IMR-90 (cell line): ENCODE measurements at regions of chrX and their contacts with region 1.

Region 1: DNA sequence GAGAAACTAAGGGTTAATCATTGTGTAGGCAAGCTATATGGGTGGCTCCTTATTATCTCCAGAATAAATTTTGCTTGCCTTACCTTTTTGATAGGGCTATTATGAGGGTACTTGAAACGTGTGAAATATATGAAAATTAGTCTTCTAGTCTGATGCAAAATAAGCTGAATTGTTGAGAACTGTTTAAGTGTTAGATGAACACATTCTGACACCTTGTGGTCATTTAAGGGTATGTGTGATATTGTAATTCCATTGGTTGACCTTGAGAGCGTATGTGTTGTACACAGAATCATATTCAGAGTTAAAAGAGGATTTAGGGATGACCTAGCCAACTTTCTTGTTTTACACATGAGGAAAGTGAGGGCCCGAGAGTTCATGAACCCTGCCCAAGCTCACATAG is 44.6 kb upstream of the LINC00632 start:
- DNase-seq: peak; percentile 18
- ATAC-seq: no peak
- H3K4me3 ChIP-seq: no peak overlapping the region
- H3K27ac ChIP-seq: no peak overlapping the region
- H3K4me1 ChIP-seq: no peaks in the 10 kb centered on the region
- H3K27me3 ChIP-seq: no peaks in the 10 kb centered on the region
- CTCF ChIP-seq: peak; percentile 43
- POLR2A ChIP-seq: no peak
- RAD21 ChIP-seq: peak; percentile 47

Region 2: DNA sequence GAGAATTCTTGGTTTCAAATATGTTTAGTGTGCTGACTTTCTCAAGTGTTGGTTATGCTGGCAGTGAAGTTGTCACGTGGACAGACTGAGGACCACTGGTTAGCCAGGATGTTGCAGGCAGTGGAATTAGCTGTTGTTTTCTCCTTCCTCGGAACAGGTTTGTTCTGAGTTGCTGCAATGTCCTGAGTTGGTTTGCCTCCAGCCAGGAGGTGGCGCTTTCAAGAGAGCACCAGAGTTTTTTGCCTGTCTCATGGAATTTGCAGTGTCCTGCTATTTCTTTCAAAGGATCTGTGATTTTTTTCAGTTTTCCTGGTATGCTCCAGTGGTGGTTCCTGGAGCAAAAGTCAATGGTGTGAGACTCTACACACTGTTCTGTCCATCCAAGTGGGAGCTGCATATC is 541.5 kb before region 1 on chrX:
- CTCF ChIA-PET with region 1: no interaction called
- POLR2A ChIA-PET with region 1: no interaction called
- dilution Hi-C with region 1: no loop called
- in situ Hi-C with region 1: no loop called
- intact Hi-C with region 1: loop called (anchors 2 kb)
- DNase-seq: no peak
- ATAC-seq: no peak
- H3K4me3 ChIP-seq: no peak overlapping the region
- H3K27ac ChIP-seq: no peak overlapping the region
- H3K4me1 ChIP-seq: no peaks in the 10 kb centered on the region
- H3K27me3 ChIP-seq: no peaks in the 10 kb centered on the region
- CTCF ChIP-seq: 0 out of 2 replicates have a peak, but pooled peaks have one; percentile 23
- POLR2A ChIP-seq: no peak
- RAD21 ChIP-seq: no peak; the same call in 1 of the 2 replicates

Region 3: GRCh38 chrX:140526171-140526570 is 138.8 kb before region 1 on chrX:
- CTCF ChIA-PET with region 1: interaction called, 6 read pairs
- POLR2A ChIA-PET with region 1: no interaction called
- dilution Hi-C with region 1: no loop called
- in situ Hi-C with region 1: no loop called
- intact Hi-C with region 1: loop called (anchors 5 kb)
- DNase-seq: peak; percentile 57
- ATAC-seq: peak; percentile 76
- H3K4me3 ChIP-seq: no peak overlapping the region
- H3K27ac ChIP-seq: no peak overlapping the region
- H3K4me1 ChIP-seq: no peaks in the 10 kb centered on the region; the same call in 1 of the 2 replicates
- H3K27me3 ChIP-seq: no peaks in the 10 kb centered on the region
- CTCF ChIP-seq: no peak; the same call in 1 of the 2 replicates
- POLR2A ChIP-seq: no peak
- RAD21 ChIP-seq: peak; percentile 28; the same call in 1 of the 2 replicates

Region 4: GRCh38 chrX:140572724-140573123 is 92.2 kb before region 1 on chrX:
- CTCF ChIA-PET with region 1: no interaction called
- POLR2A ChIA-PET with region 1: no interaction called
- dilution Hi-C with region 1: no loop called
- in situ Hi-C with region 1: no loop called
- intact Hi-C with region 1: loop called (anchors 1 kb)
- DNase-seq: peak; percentile 34
- ATAC-seq: peak; percentile 85; the same call in 1 of the 2 replicates
- H3K4me3 ChIP-seq: no peak overlapping the region
- H3K27ac ChIP-seq: no peak overlapping the region
- H3K4me1 ChIP-seq: no peaks in the 10 kb centered on the region
- H3K27me3 ChIP-seq: no peaks in the 10 kb centered on the region
- CTCF ChIP-seq: peak; percentile 58
- POLR2A ChIP-seq: no peak
- RAD21 ChIP-seq: peak; percentile 41